HAP-1 (cell line): ENCODE measurements at regions of chr20 and their contacts with region 1.

Region 1: DNA sequence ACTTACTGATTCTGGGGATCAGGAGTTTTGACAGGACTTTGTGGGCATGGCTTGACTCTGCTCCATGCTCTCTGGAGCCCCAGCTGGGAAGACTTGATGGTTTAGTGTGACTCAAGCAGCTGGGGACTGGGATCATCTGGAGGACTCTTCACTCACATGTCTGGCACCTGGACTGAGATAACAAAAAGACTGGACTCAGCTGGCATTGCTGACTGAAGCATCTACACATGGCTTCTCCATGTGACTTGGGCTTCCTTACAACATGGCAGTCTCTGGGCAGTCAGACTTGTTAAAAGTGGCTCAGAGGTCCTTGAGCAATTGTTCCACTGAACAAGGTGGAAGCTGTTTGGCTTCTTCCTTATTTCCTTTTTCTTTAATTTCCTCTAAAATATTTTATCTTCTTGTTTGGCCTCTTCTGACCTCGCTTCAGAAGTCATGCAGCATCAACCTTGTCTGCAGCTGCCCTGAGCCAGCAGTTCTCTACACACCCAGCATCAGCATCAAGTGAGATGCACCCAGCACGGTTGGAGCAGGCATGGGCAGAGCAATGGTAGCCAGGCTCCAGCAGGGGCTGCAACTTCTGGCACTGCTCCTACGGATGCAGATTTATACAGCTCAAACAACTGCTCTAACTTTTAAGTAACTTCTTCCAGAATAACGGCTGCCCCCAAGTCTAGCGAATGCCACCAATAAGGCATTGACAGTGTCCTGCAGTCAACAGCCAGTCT is 5.6 kb upstream of the HM13 start:
- DNase-seq: no peak
- H3K4me3 ChIP-seq: no peak overlapping the region
- H3K4me1 ChIP-seq: no peaks in the 10 kb centered on the region
- H3K27me3 ChIP-seq: no peaks in the 10 kb centered on the region

Region 2: DNA sequence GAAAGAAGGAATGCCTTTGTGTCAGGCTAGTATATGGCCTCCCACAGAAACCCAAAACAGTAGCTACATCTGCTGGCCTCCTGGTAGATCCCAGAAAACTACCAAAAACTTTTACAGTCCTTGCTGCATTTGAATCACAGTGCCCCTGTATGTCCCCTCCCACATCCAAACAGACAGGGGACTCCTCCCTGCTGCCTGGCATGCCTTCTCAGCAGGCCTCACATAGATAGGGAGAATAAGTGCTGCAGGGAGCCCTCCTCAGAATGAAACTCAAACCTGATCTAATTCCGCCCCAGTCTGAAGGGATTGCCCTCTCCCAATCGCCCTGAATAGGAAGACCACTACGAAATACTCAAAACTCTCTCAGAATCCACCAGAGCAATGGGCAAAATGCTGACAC is 186.2 kb before region 1 on chr20:
- in situ Hi-C with region 1: loop called (anchors 10 kb)
- DNase-seq: no peak
- H3K4me3 ChIP-seq: no peak overlapping the region
- H3K4me1 ChIP-seq: no peaks in the 10 kb centered on the region
- H3K27me3 ChIP-seq: no peaks in the 10 kb centered on the region

Region 3: GRCh38 chr20:31381766-31382165 is 126.9 kb before region 1 on chr20:
- in situ Hi-C with region 1: no loop called
- DNase-seq: no peak
- H3K4me3 ChIP-seq: no peak overlapping the region
- H3K4me1 ChIP-seq: no peaks in the 10 kb centered on the region
- H3K27me3 ChIP-seq: peaks cover 3% of the 10 kb centered on the region; the same call in 1 of the 2 replicates

Region 4: DNA sequence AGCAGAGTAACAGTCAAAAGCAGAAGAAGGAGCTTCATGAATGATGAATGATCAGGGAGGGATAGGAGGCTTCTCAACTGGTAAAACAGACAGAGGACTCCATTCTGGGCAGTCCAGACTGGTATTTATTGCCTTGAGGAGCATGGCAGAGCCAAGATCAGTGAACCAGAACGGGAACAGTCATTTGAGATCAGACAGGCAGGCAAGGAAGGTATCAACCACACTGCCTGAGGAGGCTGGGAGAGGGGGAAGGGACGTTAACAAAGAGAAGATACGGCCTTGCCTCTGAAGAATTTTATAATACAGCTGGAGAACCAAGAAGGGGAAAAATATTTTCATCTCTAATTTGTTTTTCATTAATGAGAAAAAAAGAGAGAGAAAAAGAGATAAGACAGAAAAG is 102.6 kb before region 1 on chr20 and contains the start of gene DEFB121:
- in situ Hi-C with region 1: no loop called
- DNase-seq: no peak
- H3K4me3 ChIP-seq: no peak within 1 kb of the TSS
- H3K4me1 ChIP-seq: no peaks in the 10 kb centered on the region
- H3K27me3 ChIP-seq: 0 out of 2 replicates have a peak, but pooled peaks cover 2% of the 10 kb centered on the region

Region 5: GRCh38 chr20:31630187-31630790 is 121.6 kb after region 1 on chr20:
- in situ Hi-C with region 1: no loop called
- DNase-seq: no peak
- H3K4me3 ChIP-seq: no peak overlapping the region
- H3K4me1 ChIP-seq: no peaks in the 10 kb centered on the region
- H3K27me3 ChIP-seq: no peaks in the 10 kb centered on the region

Region 6: GRCh38 chr20:31675828-31676533 is 167.3 kb after region 1 on chr20:
- in situ Hi-C with region 1: no loop called
- DNase-seq: no peak
- H3K4me3 ChIP-seq: no peak overlapping the region
- H3K4me1 ChIP-seq: peaks cover 20% of the 10 kb centered on the region
- H3K27me3 ChIP-seq: no peaks in the 10 kb centered on the region